Activated CD8-positive, alpha-beta memory T cell treated with anti-CD3 and anti-CD28 coated beads, Interleukin-2, amount 10 ng/mL, durations not matched to agents 7 days and 5 days (primary cell): ENCODE measurements at regions of chr3 and their contacts with region 1.

Region 1: GRCh38 chr3:129052675-129053074 is 7.9 kb upstream of the GP9 start:
- DNase-seq: no peak
- ATAC-seq: no peak
- H3K4me3 Mint-ChIP-seq: no peak overlapping the region
- H3K27ac Mint-ChIP-seq: no peak overlapping the region
- H3K4me1 Mint-ChIP-seq: peaks cover 6% of the 10 kb centered on the region
- H3K27me3 Mint-ChIP-seq: peaks cover 15% of the 10 kb centered on the region

Region 2: GRCh38 chr3:129016356-129016719 is 36.3 kb before region 1 on chr3:
- CTCF ChIA-PET with region 1: interaction called, 30 read pairs
- DNase-seq: peak; percentile 86
- ATAC-seq: peak; percentile 84
- H3K4me3 Mint-ChIP-seq: peak overlapping the region; percentile 66
- H3K27ac Mint-ChIP-seq: peak overlapping the region; percentile 95
- H3K4me1 Mint-ChIP-seq: peaks cover 38% of the 10 kb centered on the region
- H3K27me3 Mint-ChIP-seq: no peaks in the 10 kb centered on the region

Region 3: GRCh38 chr3:129068291-129068886 is 15.7 kb after region 1 on chr3:
- CTCF ChIA-PET with region 1: interaction called, 70 read pairs
- DNase-seq: no peak
- ATAC-seq: peak; percentile 62
- H3K4me3 Mint-ChIP-seq: peak overlapping the region; percentile 53
- H3K27ac Mint-ChIP-seq: no peak overlapping the region
- H3K4me1 Mint-ChIP-seq: peaks cover 7% of the 10 kb centered on the region
- H3K27me3 Mint-ChIP-seq: peaks cover 15% of the 10 kb centered on the region

Region 4: GRCh38 chr3:129144786-129145185 is 92.1 kb after region 1 on chr3:
- CTCF ChIA-PET with region 1: interaction called, 10 read pairs
- DNase-seq: no peak
- ATAC-seq: no peak
- H3K4me3 Mint-ChIP-seq: no peak overlapping the region
- H3K27ac Mint-ChIP-seq: no peak overlapping the region
- H3K4me1 Mint-ChIP-seq: no peaks in the 10 kb centered on the region
- H3K27me3 Mint-ChIP-seq: no peaks in the 10 kb centered on the region

Region 5: GRCh38 chr3:129238945-129239706 is 186.5 kb after region 1 on chr3:
- CTCF ChIA-PET with region 1: interaction called, 95 read pairs
- DNase-seq: peak; percentile 80
- ATAC-seq: peak; percentile 87
- H3K4me3 Mint-ChIP-seq: peak overlapping the region; percentile 53
- H3K27ac Mint-ChIP-seq: peak overlapping the region; percentile 92
- H3K4me1 Mint-ChIP-seq: peaks cover 48% of the 10 kb centered on the region
- H3K27me3 Mint-ChIP-seq: no peaks in the 10 kb centered on the region

Region 6: GRCh38 chr3:129316131-129317013 is 263.7 kb after region 1 on chr3:
- CTCF ChIA-PET with region 1: interaction called, 10 read pairs
- DNase-seq: peak; percentile 90
- ATAC-seq: peak; percentile 55
- H3K4me3 Mint-ChIP-seq: peak overlapping the region; percentile 88
- H3K27ac Mint-ChIP-seq: peak overlapping the region; percentile 73
- H3K4me1 Mint-ChIP-seq: peaks cover 31% of the 10 kb centered on the region
- H3K27me3 Mint-ChIP-seq: no peaks in the 10 kb centered on the region

Region 7: GRCh38 chr3:129663026-129663446 is 610.4 kb after region 1 on chr3:
- CTCF ChIA-PET with region 1: no interaction called
- DNase-seq: no peak
- ATAC-seq: no peak
- H3K4me3 Mint-ChIP-seq: no peak overlapping the region
- H3K27ac Mint-ChIP-seq: no peak overlapping the region
- H3K4me1 Mint-ChIP-seq: peaks cover 7% of the 10 kb centered on the region
- H3K27me3 Mint-ChIP-seq: no peaks in the 10 kb centered on the region